Spleen (tissue), 13 donors: ENCODE measurements at regions of chr9 and their contacts with region 1.

Region 1: GRCh38 chr9:93962561-93963440 is 7.6 kb upstream of the BARX1 start:
- DNase-seq: peak; percentile 91
- H3K4me3 ChIP-seq: no peak overlapping the region
- H3K27ac ChIP-seq: peak overlapping the region in 1 of 8 donors; percentile 12
- H3K4me1 ChIP-seq: peaks cover 20 to 49% (median 39%) of the 10 kb centered on the region in 6 donors
- H3K27me3 ChIP-seq: peaks cover 28 to 96% (median 42%) of the 10 kb centered on the region in 7 donors
- CTCF ChIP-seq: peak; percentile 69 to 88 (median 86)
- POLR2A ChIP-seq: no peak

Region 2: GRCh38 chr9:93682232-93682968 is 280.4 kb before region 1 on chr9:
- intact Hi-C with region 1: loop called (anchors 5 kb)
- DNase-seq: peak; percentile 81
- H3K4me3 ChIP-seq: no peak overlapping the region
- H3K27ac ChIP-seq: no peak overlapping the region
- H3K4me1 ChIP-seq: peaks cover 0 to 20% (median 2%) of the 10 kb centered on the region in 6 donors
- H3K27me3 ChIP-seq: peaks cover 0 to 10% (median 0%) of the 10 kb centered on the region in 7 donors
- CTCF ChIP-seq: peak; percentile 43 to 85 (median 75)
- POLR2A ChIP-seq: no peak